ENCODE measurements at regions of chr10 and their contacts with region 1.

Region 1: GRCh38 chr10:91923371-91924211 is at the start of gene BTAF1:
- DNase-seq: peak; percentile 80 to 98 (median 92)
- ATAC-seq: peak; percentile 96 to 98 (median 98)
- H3K4me3 ChIP-seq: peak within 1 kb of the TSS; percentile 79 to 94
- H3K4me3 Mint-ChIP-seq: peak within 1 kb of the TSS; percentile 89 to 96 (median 96)
- H3K27ac ChIP-seq: peak within 1 kb of the TSS; percentile 91
- H3K27ac Mint-ChIP-seq: peak within 1 kb of the TSS; percentile 95 to 99
- H3K4me1 ChIP-seq: peaks cover 15 to 24% of the 10 kb centered on the region in 2 experiments
- H3K4me1 Mint-ChIP-seq: peaks cover 40 to 49% (median 44%) of the 10 kb centered on the region in 3 donors
- H3K27me3 ChIP-seq: peaks cover 0 to 7% of the 10 kb centered on the region in 2 experiments
- H3K27me3 Mint-ChIP-seq: peaks cover under 1 to 4% of the 10 kb centered on the region in 2 donors
- total RNA-seq, gene BTAF1: 61.0 to 81.8 (median 66.5) TPM

Region 2: DNA sequence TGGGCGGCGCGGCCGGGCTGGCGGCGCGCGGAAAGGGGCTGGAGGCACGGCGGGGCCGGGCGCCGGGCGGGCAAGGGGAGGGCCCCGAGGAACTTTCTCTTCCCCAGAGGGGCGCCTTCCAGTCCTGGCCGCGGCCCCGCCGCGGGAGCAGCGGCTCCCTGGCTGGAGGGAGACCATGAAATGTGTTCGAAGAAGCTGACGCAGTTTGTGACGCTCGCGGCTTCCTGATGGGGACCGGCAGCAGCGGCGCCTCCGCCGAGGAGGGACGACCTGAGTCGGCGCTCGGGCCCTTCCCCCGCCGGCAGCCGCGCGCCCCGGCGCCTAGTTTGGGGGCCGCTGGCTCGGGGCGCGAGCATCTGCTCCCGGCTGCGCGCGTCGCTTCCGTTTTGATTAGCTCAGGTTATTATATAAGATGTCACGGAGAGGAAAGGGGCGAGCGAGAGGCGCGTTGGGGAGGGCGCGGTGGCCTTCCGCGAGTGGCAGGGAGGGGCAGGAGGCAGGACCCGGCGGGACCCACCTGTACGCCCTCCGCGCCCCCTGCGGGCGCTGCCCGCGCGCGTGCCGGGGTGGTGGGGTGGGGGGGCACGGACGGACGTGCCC is 760.2 kb before region 1 on chr10:
- CTCF ChIA-PET with region 1: no interaction called
- POLR2A ChIA-PET with region 1: interaction called, 4 to 11 read pairs
- DNase-seq: peak; percentile 59 to 94 (median 90)
- ATAC-seq: peak; percentile 62 to 76 (median 66)
- H3K4me3 ChIP-seq: peak overlapping the region; percentile 66 to 74
- H3K4me3 Mint-ChIP-seq: peak overlapping the region; percentile 87 to 91 (median 90)
- H3K27ac ChIP-seq: peak overlapping the region; percentile 90
- H3K27ac Mint-ChIP-seq: peak overlapping the region; percentile 93 to 94
- H3K4me1 ChIP-seq: peaks cover 3 to 16% of the 10 kb centered on the region in 2 experiments
- H3K4me1 Mint-ChIP-seq: peaks cover 55 to 60% (median 58%) of the 10 kb centered on the region in 3 donors
- H3K27me3 ChIP-seq: no peaks in the 10 kb centered on the region
- H3K27me3 Mint-ChIP-seq: no peaks in the 10 kb centered on the region

Region 3: GRCh38 chr10:91758303-91759146 is 165.1 kb before region 1 on chr10:
- CTCF ChIA-PET with region 1: interaction called, 3 to 18 read pairs
- POLR2A ChIA-PET with region 1: no interaction called
- DNase-seq: peak in 1 of 35 experiments; percentile 74
- ATAC-seq: peak; percentile 59 to 84 (median 70)
- H3K4me3 ChIP-seq: no peak overlapping the region
- H3K4me3 Mint-ChIP-seq: no peak overlapping the region
- H3K27ac ChIP-seq: no peak overlapping the region
- H3K27ac Mint-ChIP-seq: no peak overlapping the region
- H3K4me1 ChIP-seq: peaks cover 0 to 2% of the 10 kb centered on the region in 2 experiments
- H3K4me1 Mint-ChIP-seq: peaks cover 5 to 7% (median 6%) of the 10 kb centered on the region in 3 donors
- H3K27me3 ChIP-seq: peaks cover 0 to 3% of the 10 kb centered on the region in 2 experiments
- H3K27me3 Mint-ChIP-seq: peaks cover 0 to 12% of the 10 kb centered on the region in 2 donors

Region 4: DNA sequence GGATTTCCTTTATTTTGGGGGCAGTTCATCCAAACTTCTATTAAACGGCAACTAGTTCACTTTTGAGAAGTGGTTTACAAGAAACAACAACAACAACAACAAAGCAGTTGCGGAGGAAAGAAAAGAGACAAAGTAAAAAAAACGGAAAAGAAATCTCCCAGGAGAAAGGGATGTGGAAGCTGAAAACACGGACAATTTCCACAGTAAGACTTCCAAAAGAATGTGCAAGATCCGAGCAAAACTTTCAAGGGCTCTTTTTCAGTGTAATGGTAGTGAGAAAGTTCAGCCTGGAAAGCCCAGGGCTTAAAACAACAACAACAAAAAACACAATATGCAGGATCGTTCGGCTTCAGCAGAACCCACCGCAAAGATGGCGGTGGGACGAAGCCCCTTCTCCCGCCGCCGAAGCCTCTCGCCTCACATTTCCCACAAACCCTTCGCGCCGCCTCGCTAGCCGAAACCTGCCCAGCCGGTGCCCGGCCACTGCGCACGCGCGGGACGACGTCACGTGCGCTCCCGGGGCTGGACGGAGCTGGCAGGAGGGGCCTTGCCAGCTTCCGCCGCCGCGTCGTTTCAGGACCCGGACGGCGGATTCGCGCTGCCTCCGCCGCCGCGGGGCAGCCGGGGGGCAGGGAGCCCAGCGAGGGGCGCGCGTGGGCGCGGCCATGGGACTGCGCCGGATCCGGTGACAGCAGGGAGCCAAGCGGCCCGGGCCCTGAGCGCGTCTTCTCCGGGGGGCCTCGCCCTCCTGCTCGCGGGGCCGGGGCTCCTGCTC is 125.5 kb before region 1 on chr10 and contains the start of gene TNKS2:
- CTCF ChIA-PET with region 1: interaction called in 1 of 2 experiments, 8 read pairs
- POLR2A ChIA-PET with region 1: interaction called, 3 to 10 read pairs
- DNase-seq: peak; percentile 76 to 96 (median 85)
- ATAC-seq: peak; percentile 83 to 84 (median 83)
- H3K4me3 ChIP-seq: peak within 1 kb of the TSS; percentile 88 to 92
- H3K4me3 Mint-ChIP-seq: peak within 1 kb of the TSS; percentile 91 to 98 (median 97)
- H3K27ac ChIP-seq: peak within 1 kb of the TSS; percentile 86
- H3K27ac Mint-ChIP-seq: peak within 1 kb of the TSS; percentile 96 to 98
- H3K4me1 ChIP-seq: peaks cover 19 to 30% of the 10 kb centered on the region in 2 experiments
- H3K4me1 Mint-ChIP-seq: peaks cover 64 to 67% (median 65%) of the 10 kb centered on the region in 3 donors
- H3K27me3 ChIP-seq: no peaks in the 10 kb centered on the region
- H3K27me3 Mint-ChIP-seq: no peaks in the 10 kb centered on the region
- total RNA-seq, gene TNKS2: 41.0 to 53.7 (median 47.6) TPM

Region 5: GRCh38 chr10:91908337-91909116 is 15.1 kb before region 1 on chr10:
- CTCF ChIA-PET with region 1: interaction called, 6 to 74 read pairs
- POLR2A ChIA-PET with region 1: interaction called, 8 to 11 read pairs
- DNase-seq: peak; percentile 27 to 83 (median 60)
- ATAC-seq: peak; percentile 87 to 91 (median 87)
- H3K4me3 ChIP-seq: peak overlapping the region; percentile 63 to 95
- H3K4me3 Mint-ChIP-seq: peak overlapping the region; percentile 86 to 96 (median 90)
- H3K27ac ChIP-seq: peak overlapping the region; percentile 53
- H3K27ac Mint-ChIP-seq: peak overlapping the region; percentile 85 to 92
- H3K4me1 ChIP-seq: peaks cover 12 to 17% of the 10 kb centered on the region in 2 experiments
- H3K4me1 Mint-ChIP-seq: peaks cover 25 to 29% (median 28%) of the 10 kb centered on the region in 3 donors
- H3K27me3 ChIP-seq: peaks cover 0 to 3% of the 10 kb centered on the region in 2 experiments
- H3K27me3 Mint-ChIP-seq: peaks cover 4 to 6% of the 10 kb centered on the region in 2 donors

Region 6: DNA sequence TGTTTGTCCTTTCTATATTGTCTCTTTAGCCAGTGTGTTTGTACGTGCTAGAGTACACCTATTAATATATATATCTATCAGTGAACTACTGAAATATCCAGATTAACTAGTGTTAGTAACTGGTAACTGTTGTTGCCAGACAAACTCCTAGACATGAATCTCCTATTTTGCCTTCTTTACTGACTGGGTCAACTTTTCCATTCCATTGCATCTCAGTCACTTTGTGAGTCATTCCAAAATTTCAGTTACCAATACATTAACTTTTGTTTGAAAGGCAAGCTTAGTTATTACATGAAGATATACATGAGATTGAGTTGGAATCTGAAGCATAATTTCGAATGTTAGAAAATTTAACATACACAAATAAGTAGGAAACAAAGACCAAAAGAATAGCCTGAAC is 51.4 kb after region 1 on chr10:
- CTCF ChIA-PET with region 1: no interaction called
- POLR2A ChIA-PET with region 1: interaction called in 1 of 2 experiments, 11 read pairs
- DNase-seq: no peak
- ATAC-seq: no peak
- H3K4me3 ChIP-seq: no peak overlapping the region
- H3K4me3 Mint-ChIP-seq: no peak overlapping the region
- H3K27ac ChIP-seq: no peak overlapping the region
- H3K27ac Mint-ChIP-seq: no peak overlapping the region
- H3K4me1 ChIP-seq: no peaks in the 10 kb centered on the region
- H3K4me1 Mint-ChIP-seq: peaks cover 0 to under 1% (median 0%) of the 10 kb centered on the region in 3 donors
- H3K27me3 ChIP-seq: no peaks in the 10 kb centered on the region
- H3K27me3 Mint-ChIP-seq: no peaks in the 10 kb centered on the region

Region 7: DNA sequence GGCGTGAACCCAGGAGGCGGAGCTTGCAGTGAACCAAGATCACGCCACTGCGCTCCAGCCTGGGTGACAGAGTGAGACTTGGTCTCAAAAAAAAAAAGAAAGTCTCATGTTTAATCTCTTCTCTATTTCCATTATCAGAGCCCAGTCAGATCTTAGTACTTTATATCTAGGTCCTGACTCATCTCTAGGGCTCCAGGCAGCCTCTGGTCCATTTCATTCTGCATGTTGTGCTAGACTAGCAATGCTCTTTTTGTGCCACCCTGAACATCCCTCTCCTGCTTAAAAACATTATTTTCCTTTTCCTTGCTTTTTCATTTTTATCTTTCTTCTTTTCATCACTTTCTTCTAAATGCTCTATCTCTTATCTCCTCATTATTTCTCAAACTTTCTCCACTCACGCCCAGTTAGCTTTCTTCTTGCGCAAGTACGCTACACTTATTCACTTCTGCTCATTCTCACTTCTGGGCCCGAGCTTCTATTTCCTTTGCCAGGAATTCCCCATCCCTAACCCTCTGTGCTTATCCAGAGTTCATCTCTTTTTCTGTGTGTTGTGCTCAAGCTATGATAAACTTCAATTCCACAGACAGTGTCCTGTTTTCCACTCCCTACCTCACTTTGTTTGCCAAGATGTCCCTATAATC is 63.9 kb after region 1 on chr10:
- CTCF ChIA-PET with region 1: no interaction called
- POLR2A ChIA-PET with region 1: no interaction called
- DNase-seq: no peak
- ATAC-seq: no peak
- H3K4me3 ChIP-seq: no peak overlapping the region
- H3K4me3 Mint-ChIP-seq: no peak overlapping the region
- H3K27ac ChIP-seq: no peak overlapping the region
- H3K27ac Mint-ChIP-seq: peak overlapping the region in 1 of 2 donors; percentile 2
- H3K4me1 ChIP-seq: no peaks in the 10 kb centered on the region
- H3K4me1 Mint-ChIP-seq: peaks cover 0 to 18% (median 14%) of the 10 kb centered on the region in 3 donors
- H3K27me3 ChIP-seq: no peaks in the 10 kb centered on the region
- H3K27me3 Mint-ChIP-seq: no peaks in the 10 kb centered on the region